Activated T-helper 1 cell treated with anti-CD3 and anti-CD28 coated beads, Interleukin-12 subunit alpha, Interleukin-12 subunit beta, Interleukin-2, Interleukin-4 antibody, amounts not matched to agents 30 ng/mL and 10 ng/mL and 1 ng/mL, durations not matched to agents 14 hours and 24 hours and 36 hours (primary cell): ENCODE measurements at regions of chr3 and their contacts with region 1.

Region 1: DNA sequence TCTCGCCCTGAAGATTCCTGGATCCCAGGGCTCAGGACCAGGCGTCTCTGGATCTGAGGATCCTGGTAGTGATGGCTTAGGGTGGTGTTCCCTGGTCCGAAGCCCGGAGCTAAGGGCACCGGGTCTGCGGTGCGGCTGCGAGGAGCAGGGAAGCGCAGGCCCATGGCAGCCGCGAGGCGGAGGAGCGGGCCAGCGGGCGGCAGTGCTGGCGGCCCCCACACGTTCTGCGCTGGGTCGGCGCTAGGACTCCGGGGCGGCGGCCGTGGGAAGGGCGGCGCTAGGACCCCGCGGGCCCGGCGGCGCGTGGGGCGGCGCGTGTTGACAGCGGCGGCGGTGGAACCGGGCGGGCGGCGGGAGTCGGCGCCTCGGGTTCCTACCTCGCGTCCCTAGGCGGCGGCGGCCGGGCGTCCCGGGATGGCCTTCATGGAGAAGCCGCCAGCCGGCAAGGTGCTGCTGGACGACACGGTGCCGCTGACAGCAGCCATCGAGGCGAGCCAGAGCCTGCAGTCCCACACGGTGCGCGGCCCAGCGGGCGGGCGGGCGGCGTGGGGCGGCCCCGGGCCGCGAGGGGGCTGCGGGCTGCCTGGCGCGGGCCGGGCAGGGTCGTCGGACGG is at the start of gene PXK:
- DNase-seq: peak; percentile 83
- H3K4me3 Mint-ChIP-seq: peak within 1 kb of the TSS; percentile 100
- H3K27ac Mint-ChIP-seq: peak within 1 kb of the TSS; percentile 99
- H3K4me1 Mint-ChIP-seq: peaks cover 48% of the 10 kb centered on the region
- H3K27me3 Mint-ChIP-seq: no peaks in the 10 kb centered on the region
- total RNA-seq, gene PXK: 43.4 and 48.1 TPM in 2 replicates

Region 2: GRCh38 chr3:56923521-56924224 is 1409.0 kb before region 1 on chr3:
- intact Hi-C with region 1: loop called (anchors 5 kb)
- DNase-seq: peak; percentile 47
- H3K4me3 Mint-ChIP-seq: peak overlapping the region; percentile 15
- H3K27ac Mint-ChIP-seq: peak overlapping the region; percentile 81
- H3K4me1 Mint-ChIP-seq: peaks cover 74% of the 10 kb centered on the region
- H3K27me3 Mint-ChIP-seq: no peaks in the 10 kb centered on the region

Region 3: DNA sequence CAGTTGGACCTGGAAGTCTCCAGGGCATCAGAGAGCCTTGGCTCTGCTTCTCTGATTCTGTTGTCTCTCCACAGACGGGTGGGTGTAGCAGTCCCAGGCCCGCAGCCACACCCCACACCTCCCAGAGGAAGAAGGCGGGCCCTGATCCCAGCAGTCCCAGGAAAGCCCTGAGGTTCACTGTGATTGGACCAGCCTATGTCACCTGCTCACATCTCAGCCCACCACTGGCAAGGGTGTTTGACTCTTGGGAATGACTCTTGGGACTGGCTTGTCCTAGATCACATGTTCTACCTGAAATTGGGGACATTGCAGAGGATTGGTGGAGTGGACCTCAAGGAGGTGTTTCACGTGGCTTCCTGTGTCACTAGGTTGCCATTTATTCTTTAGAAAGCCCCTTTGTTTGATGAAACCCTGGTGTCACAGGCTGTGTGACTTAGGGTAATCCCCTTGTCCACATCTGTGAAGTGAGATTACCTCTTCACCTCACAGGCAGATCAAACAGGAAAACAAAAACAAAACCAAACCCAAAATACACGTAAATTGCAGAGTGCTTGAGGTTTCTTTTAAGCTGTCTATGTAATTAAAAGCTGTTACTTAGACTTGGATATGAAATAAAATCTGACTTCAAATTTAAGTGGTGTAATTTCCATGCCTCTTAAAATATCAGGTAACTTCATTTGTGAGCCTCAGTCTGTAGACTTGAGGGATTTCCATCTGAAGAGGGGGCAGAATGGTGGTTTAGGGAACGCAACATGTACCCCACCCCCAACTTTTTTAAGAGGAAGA is 297.8 kb before region 1 on chr3:
- intact Hi-C with region 1: loop called (anchors 1 kb)
- DNase-seq: peak; percentile 66
- H3K4me3 Mint-ChIP-seq: peak overlapping the region; percentile 78
- H3K27ac Mint-ChIP-seq: peak overlapping the region; percentile 85
- H3K4me1 Mint-ChIP-seq: peaks cover 51% of the 10 kb centered on the region
- H3K27me3 Mint-ChIP-seq: peaks cover 7% of the 10 kb centered on the region

Region 4: GRCh38 chr3:58161435-58162398 is 171.0 kb before region 1 on chr3:
- intact Hi-C with region 1: no loop called
- DNase-seq: no peak
- H3K4me3 Mint-ChIP-seq: no peak overlapping the region
- H3K27ac Mint-ChIP-seq: no peak overlapping the region
- H3K4me1 Mint-ChIP-seq: no peaks in the 10 kb centered on the region
- H3K27me3 Mint-ChIP-seq: no peaks in the 10 kb centered on the region

Region 5: GRCh38 chr3:58349792-58350626 is 17.3 kb after region 1 on chr3:
- intact Hi-C with region 1: loop called (anchors 1 kb)
- DNase-seq: peak; percentile 37
- H3K4me3 Mint-ChIP-seq: peak overlapping the region; percentile 71
- H3K27ac Mint-ChIP-seq: peak overlapping the region; percentile 88
- H3K4me1 Mint-ChIP-seq: peaks cover 78% of the 10 kb centered on the region
- H3K27me3 Mint-ChIP-seq: no peaks in the 10 kb centered on the region

Region 6: DNA sequence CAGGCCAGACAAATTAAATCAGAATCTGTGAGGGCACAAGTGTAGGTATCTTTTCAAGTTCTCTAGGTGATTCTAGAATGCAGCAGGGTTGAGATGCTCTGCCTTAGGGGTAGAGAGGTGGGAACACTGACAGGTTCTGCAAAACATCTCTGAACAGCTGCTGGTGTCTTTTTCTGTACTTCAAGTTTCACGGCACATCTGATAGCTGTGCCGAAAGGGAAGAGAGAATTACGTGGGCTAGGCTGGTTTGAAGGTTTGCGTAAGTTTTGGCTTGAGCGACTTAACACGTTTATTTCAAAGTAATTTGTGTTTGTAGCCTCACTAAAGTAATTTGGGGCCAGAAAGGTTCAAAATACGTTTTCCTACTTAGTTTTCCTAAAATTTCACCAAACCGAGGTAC is 22.5 kb after region 1 on chr3:
- intact Hi-C with region 1: loop called (anchors 1 kb)
- DNase-seq: no peak
- H3K4me3 Mint-ChIP-seq: no peak overlapping the region
- H3K27ac Mint-ChIP-seq: peak overlapping the region; percentile 96
- H3K4me1 Mint-ChIP-seq: peaks cover 75% of the 10 kb centered on the region
- H3K27me3 Mint-ChIP-seq: no peaks in the 10 kb centered on the region

Region 7: DNA sequence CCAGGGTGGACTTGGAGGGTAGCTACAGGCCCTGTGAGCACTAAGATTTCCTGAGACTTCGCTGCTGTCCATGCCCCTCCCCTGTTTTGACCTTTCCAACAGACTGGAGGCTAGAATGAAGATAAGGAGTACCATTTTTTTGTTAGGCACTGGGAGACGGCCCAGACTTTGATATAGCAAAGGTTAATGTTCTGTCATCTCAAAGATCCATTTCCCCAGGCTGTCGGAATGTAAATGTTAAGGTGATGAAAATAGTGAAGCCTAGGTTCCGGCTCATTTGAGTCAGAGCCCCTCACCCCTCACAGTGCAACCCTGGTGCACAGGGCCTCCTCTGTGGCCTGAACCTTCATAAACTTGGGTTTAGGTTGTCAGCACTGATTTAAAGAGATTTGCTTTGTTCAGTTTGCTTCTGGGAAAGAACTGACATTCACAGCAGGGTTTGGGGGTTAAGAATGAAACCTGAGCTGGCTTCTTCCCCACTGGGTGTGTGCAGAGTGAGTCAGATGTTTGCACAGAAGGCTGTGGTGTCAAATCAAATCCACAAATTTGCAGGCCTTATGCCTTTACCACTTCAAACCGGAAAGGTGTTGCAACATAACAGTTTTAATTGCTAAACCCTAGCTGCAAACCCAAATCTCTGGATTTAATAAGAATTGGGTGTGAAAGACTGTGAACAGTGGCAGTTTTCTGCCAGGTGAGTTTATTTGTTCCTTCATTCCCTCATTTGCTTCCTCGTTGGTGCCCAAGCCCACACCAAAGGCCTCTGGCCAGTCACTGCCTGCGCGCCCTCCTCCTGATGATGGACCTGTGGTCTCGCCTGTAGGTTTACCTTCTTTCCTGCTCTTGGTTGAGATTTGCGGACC is 138.6 kb after region 1 on chr3:
- intact Hi-C with region 1: loop called (anchors 2 kb)
- DNase-seq: peak; percentile 73
- H3K4me3 Mint-ChIP-seq: peak overlapping the region; percentile 37
- H3K27ac Mint-ChIP-seq: peak overlapping the region; percentile 68
- H3K4me1 Mint-ChIP-seq: peaks cover 59% of the 10 kb centered on the region
- H3K27me3 Mint-ChIP-seq: peaks cover 8% of the 10 kb centered on the region